Left cardiac atrium (tissue), 4 donors: ENCODE measurements at regions of chr17 and their contacts with region 1.

Region 1: DNA sequence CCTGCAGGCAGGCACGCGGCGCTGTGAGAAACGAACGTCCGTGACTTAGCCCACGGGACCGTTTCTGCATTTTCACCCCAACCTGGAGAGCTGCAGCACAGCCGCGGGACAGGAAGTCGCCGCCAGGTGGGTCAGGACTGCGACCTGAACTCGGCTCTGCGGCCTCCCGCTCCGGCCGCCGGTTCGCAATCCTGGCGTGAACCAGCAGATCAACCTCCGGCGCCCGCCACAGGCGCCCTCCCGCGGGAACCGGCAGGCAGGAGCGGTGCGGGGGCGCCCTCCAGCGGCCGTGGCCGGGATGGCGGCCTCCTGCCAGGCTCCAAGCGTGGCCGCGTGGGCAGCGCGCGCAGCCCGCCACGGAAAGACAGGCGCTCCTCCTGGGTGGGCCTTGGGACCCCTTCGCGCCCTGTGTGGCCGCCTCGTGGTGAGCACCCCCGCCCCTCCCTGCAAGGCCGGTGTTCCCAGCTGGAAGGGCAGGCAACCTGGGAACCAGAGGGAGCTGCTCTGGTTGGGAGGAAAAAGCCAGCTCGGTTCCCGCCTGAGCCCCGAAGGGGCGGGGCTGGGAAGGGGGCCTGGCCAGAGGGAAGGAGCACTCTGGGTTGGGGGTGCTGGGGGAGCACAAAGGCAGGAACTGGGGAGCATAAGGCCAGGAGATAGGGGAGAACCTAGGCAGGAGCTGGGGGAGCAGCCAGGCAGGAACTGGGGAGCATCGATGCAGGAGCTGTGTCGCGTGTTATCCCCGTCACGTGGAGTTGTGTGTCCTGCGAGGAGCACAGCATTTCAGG is 28.2 kb downstream of the ACTG1 start:
- DNase-seq: peak; percentile 92
- ATAC-seq: peak; percentile 62 to 65

Region 2: DNA sequence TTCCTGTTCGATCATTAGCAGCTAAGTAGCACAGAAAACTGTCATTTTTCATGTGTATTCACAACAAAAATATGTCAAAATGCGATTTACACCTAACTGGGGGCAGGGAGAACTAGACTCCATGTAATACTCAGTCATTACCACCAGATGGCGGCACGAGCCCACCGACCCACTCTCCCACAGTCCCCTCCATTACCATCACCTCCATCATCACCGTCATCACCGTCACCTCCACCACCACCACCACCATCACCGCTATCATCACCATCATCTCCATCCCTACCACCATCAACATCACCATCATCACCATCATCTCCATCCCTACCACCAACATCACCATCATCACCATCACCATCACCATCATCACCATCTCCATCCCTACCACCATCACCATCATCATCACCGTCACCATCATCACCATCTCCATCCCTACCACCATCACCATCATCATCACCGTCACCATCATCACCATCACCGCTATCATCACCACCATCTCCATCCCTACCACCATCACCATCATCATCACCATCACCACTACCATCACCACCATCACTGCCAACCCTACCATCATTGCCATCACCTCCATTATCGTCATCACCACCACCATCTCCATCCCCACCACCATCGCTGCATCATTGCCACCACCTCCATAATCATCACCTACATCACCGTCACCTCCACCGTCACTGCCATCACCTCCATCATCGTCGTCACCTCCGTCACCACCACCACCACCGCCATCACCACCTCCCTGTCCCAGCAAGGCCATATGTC is 230.8 kb before region 1 on chr17:
- intact Hi-C with region 1: loop called (anchors 2 to 5 kb)
- DNase-seq: no peak
- ATAC-seq: peak; percentile 20 to 22

Region 3: GRCh38 chr17:81294856-81295680 is 189.3 kb before region 1 on chr17 and contains the start of gene SLC38A10:
- intact Hi-C with region 1: loop called (anchors 5 to 10 kb)
- DNase-seq: peak; percentile 95
- ATAC-seq: peak; percentile 96
- total RNA-seq, gene SLC38A10: 46.4 to 54.0 TPM

Region 4: GRCh38 chr17:81401723-81402529 is 82.5 kb before region 1 on chr17:
- intact Hi-C with region 1: loop called (anchors 5 kb)
- DNase-seq: no peak
- ATAC-seq: peak in 1 of 2 donors; percentile 2

Region 5: GRCh38 chr17:81422776-81423697 is 61.4 kb before region 1 on chr17:
- intact Hi-C with region 1: loop called in 1 of 2 experiments (anchors 5 kb)
- DNase-seq: peak; percentile 89
- ATAC-seq: peak; percentile 42 to 65